ENCODE measurements at regions of chr1 and their contacts with region 1.

Region 1: GRCh38 chr1:178749581-178750166 is 24.6 kb downstream of the RALGPS2 start:
- DNase-seq: no peak
- H3K4me3 ChIP-seq: no peak overlapping the region
- H3K27ac ChIP-seq: no peak overlapping the region
- H3K4me1 ChIP-seq: no peaks in the 10 kb centered on the region
- H3K27me3 ChIP-seq: no peaks in the 10 kb centered on the region
- CTCF ChIP-seq: no peak
- POLR2A ChIP-seq: no peak

Region 2: GRCh38 chr1:178310685-178311105 is 439.0 kb before region 1 on chr1:
- CTCF ChIA-PET with region 1: interaction called, 15 read pairs
- POLR2A ChIA-PET with region 1: no interaction called
- dilution Hi-C with region 1: no loop called
- intact Hi-C with region 1: loop called (anchors 2 kb)
- DNase-seq: peak; percentile 70
- H3K4me3 ChIP-seq: no peak overlapping the region
- H3K27ac ChIP-seq: no peak overlapping the region
- H3K4me1 ChIP-seq: no peaks in the 10 kb centered on the region
- H3K27me3 ChIP-seq: no peaks in the 10 kb centered on the region
- CTCF ChIP-seq: peak; percentile 50 to 56
- POLR2A ChIP-seq: no peak

Region 3: GRCh38 chr1:178542560-178543356 is 206.9 kb before region 1 on chr1:
- CTCF ChIA-PET with region 1: interaction called, 325 read pairs
- POLR2A ChIA-PET with region 1: interaction called, 3 read pairs
- dilution Hi-C with region 1: no loop called
- intact Hi-C with region 1: loop called (anchors 1 kb)
- DNase-seq: peak; percentile 89
- H3K4me3 ChIP-seq: peak overlapping the region; percentile 48 to 77 (median 53)
- H3K27ac ChIP-seq: no peak overlapping the region
- H3K4me1 ChIP-seq: peaks cover 11% of the 10 kb centered on the region
- H3K27me3 ChIP-seq: no peaks in the 10 kb centered on the region
- CTCF ChIP-seq: peak; percentile 83 to 89
- POLR2A ChIP-seq: no peak

Region 4: DNA sequence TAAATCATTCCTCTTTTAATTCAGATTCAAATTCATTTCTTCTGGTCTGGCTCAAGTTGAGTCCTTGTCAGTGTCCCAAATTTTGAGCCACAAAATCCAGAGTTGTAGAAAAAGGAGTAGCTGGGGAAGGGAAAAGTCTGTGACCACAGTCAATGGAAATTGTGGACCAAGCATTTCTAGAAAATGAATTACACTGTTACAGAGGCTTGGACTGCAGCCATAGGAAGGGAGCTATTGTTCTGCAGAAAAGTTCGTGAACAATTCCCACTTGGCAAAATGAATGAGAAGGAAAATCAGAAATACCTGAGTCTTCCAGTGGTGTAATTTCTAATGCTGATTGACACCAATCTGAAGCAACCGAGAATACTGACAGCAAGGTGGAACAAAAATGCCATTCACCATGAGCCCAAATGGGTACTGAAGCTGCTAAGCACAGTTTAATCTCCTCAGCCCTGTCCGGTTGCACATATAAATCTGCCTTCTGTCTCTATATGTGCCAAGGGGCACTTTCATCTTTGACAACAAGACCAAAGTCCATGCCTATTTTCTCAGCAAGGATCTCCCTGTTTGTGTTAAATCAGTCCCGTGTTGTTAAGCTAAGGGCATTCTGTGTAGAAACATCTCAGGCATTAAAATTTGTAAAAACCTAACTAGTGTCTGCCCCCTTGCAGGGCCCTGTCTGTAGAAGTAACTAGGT is 185.4 kb before region 1 on chr1:
- CTCF ChIA-PET with region 1: interaction called, 11 read pairs
- POLR2A ChIA-PET with region 1: no interaction called
- dilution Hi-C with region 1: no loop called
- intact Hi-C with region 1: no loop called
- DNase-seq: peak; percentile 81
- H3K4me3 ChIP-seq: no peak overlapping the region
- H3K27ac ChIP-seq: no peak overlapping the region
- H3K4me1 ChIP-seq: peaks cover 2% of the 10 kb centered on the region
- H3K27me3 ChIP-seq: no peaks in the 10 kb centered on the region
- CTCF ChIP-seq: no peak
- POLR2A ChIP-seq: no peak

Region 5: DNA sequence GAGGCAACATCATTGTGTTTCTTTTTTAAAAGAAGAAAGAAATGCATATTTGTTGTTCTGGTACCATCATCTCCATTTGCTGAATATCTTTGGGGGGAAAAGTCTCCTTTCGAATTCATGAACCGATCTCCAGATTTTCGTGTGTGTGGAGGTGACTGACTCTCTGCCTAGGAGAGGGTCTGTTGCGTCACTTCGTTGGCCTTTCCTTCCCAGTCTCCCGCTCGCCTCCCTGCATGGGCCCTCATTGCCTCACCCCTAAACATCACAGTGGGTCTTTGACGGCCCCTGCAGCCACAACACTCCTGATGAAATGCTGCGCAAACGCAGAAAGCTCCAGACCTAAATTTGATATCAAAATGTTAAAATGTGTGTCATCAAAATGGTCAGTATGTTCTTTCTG is 127.9 kb before region 1 on chr1:
- CTCF ChIA-PET with region 1: interaction called, 10 read pairs
- POLR2A ChIA-PET with region 1: no interaction called
- dilution Hi-C with region 1: no loop called
- intact Hi-C with region 1: no loop called
- DNase-seq: no peak
- H3K4me3 ChIP-seq: no peak overlapping the region
- H3K27ac ChIP-seq: no peak overlapping the region
- H3K4me1 ChIP-seq: no peaks in the 10 kb centered on the region
- H3K27me3 ChIP-seq: no peaks in the 10 kb centered on the region
- CTCF ChIP-seq: no peak
- POLR2A ChIP-seq: no peak

Region 6: DNA sequence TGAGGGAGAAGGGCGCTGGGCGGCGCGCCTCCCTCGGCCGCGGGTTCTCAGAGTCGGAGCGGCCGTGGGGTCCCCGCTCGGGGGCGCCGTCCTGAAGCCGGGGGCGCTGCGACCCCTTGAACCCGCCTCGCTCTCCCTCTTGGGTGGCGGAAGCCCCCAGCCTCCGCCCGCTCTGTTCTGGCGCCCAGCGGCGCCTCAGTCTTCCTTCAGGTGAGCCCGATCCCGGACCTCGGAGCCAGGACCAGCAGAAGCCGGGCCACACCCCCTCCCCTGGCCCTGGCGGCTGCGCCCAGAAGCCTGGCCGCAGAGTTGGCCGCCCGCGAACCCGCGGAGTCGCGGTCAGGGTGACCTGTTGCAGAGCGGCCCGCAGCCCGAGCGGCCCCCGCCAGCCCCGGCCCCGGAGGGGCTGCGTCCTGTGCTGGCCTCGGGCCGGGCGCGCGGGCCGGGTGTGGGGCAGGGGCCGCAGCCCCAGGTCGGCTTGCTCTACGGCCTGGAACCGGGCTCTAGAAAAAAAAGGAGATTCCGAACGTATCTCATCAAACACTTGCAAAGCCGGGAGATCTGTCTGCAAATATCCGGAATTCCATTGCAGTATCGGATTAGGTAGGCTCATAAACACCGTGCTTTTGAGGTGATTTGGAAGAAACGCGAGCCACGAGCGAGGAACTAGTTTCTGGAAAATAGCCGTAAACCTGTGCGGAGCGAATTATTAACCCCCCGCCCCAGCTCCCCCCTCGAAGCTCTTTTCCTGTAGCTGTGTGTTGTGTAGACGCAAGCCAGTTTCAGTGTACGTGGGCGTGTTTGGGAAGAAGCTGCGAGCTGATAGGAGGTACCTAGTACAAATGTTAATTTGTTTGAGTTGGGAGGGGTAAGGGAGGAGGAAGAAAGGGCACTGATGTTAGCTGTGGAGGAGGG is 23.8 kb before region 1 on chr1:
- CTCF ChIA-PET with region 1: interaction called, 55 read pairs
- POLR2A ChIA-PET with region 1: interaction called, 3 read pairs
- dilution Hi-C with region 1: no loop called
- intact Hi-C with region 1: no loop called
- DNase-seq: peak; percentile 86
- H3K4me3 ChIP-seq: peak overlapping the region; percentile 68 to 94 (median 92)
- H3K27ac ChIP-seq: peak overlapping the region; percentile 68
- H3K4me1 ChIP-seq: peaks cover 28% of the 10 kb centered on the region
- H3K27me3 ChIP-seq: no peaks in the 10 kb centered on the region
- CTCF ChIP-seq: peak in 1 of 2 donors; percentile 25
- POLR2A ChIP-seq: peak; percentile 49

Region 7: GRCh38 chr1:178768423-178768822 is 18.7 kb after region 1 on chr1:
- CTCF ChIA-PET with region 1: interaction called, 15 read pairs
- POLR2A ChIA-PET with region 1: no interaction called
- dilution Hi-C with region 1: no loop called
- intact Hi-C with region 1: no loop called
- DNase-seq: no peak
- H3K4me3 ChIP-seq: no peak overlapping the region
- H3K27ac ChIP-seq: no peak overlapping the region
- H3K4me1 ChIP-seq: no peaks in the 10 kb centered on the region
- H3K27me3 ChIP-seq: no peaks in the 10 kb centered on the region
- CTCF ChIP-seq: peak; percentile 73 to 78
- POLR2A ChIP-seq: no peak

Region 8: DNA sequence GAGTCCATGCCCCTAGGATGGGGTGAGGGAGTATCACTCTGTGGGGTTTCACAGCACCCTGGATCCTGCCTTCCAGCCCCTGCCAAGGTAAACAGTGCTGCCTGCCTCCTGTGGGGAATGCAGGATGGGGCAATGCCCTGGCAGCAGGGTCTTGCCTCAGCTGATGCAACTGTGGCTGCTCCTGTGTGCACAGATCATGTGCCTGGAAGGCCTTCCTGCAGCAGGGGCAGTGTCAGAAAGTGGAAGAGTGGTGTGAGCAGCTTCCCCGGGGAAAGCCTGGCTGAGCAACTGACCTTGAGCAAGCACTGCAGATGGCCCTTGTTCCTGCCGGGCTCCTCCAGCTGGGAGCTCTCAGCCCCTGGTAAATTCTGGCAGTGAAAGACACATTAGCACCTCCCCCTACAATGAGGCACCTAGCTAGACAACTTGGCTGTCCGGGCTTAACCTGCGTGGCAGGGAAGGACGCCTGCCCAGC is 342.1 kb after region 1 on chr1:
- CTCF ChIA-PET with region 1: no interaction called
- POLR2A ChIA-PET with region 1: no interaction called
- dilution Hi-C with region 1: no loop called
- intact Hi-C with region 1: no loop called
- DNase-seq: no peak
- H3K4me3 ChIP-seq: no peak overlapping the region
- H3K27ac ChIP-seq: no peak overlapping the region
- H3K4me1 ChIP-seq: peaks cover 6% of the 10 kb centered on the region
- H3K27me3 ChIP-seq: no peaks in the 10 kb centered on the region
- CTCF ChIP-seq: no peak
- POLR2A ChIP-seq: no peak

Measured in endothelial cell of umbilical vein (primary cell).